ENCODE measurements at regions of chr19 and their contacts with region 1.

Region 1: DNA sequence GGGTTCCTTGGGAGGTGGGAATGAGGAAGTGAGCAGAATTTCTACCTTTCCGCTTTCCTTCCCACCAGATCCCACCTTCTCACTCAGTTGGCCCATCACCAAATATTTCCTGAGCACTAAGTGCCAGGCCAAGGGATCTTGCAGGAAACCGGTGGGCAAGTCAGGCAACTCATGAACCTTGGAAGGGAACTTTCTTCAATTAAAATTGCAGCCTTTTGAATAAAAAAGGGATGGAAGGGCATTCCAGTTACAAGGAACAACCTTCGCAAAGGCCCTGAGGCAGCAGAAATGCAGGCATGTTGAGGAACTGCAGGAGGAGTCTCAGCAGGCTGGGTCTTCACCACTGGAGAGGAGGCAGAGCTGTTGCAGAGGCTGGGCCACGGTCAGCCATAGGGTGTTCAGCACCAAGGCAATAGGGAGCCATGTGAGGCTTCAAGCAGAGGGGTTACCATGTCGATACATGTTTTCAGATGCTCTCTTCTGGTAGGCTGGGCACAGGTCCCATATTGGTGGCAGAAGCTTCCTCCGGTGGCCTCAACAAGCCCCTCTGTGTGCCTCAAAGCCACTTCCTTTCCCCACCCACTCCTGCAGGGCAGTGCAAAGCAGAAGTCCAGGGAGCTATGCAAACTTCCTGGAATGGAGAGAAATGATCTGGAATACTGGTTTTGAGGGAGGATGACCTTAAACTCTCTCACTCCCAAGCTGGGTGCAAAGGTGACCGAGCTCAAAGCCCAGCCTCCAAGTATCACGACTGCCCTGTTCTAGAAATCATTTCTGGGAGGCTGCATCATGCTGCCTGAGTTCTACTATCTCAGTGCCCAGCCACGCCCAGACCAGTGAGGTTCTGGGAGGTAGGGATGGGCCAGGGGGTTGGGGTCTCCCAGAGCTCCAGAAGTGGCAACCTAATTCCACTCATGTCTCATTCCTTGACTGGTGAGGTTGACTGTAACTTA is at the start of gene FUT6:
- DNase-seq: peak; percentile 59
- ATAC-seq: peak; percentile 70
- H3K4me3 ChIP-seq: peak within 1 kb of the TSS; percentile 69 to 84 (median 75)
- H3K27ac ChIP-seq: peak within 1 kb of the TSS; percentile 80
- H3K4me1 ChIP-seq: peaks cover 58% of the 10 kb centered on the region
- H3K27me3 ChIP-seq: no peaks in the 10 kb centered on the region; a peak in 1 of 5 replicates
- CTCF ChIP-seq: 0 out of 2 replicates have a peak, but pooled peaks have one; percentile 6
- EP300 ChIP-seq: 0 out of 4 replicates have a peak, but pooled peaks of 1 of the 2 experiments have one; percentile 55
- POLR2A ChIP-seq: peak in 1 of 2 experiments; percentile 63; a peak in 2 of 4 replicates
- RAD21 ChIP-seq: no peak
- total RNA-seq, gene FUT6: 5.0 and 8.2 TPM in 2 replicates

Region 2: DNA sequence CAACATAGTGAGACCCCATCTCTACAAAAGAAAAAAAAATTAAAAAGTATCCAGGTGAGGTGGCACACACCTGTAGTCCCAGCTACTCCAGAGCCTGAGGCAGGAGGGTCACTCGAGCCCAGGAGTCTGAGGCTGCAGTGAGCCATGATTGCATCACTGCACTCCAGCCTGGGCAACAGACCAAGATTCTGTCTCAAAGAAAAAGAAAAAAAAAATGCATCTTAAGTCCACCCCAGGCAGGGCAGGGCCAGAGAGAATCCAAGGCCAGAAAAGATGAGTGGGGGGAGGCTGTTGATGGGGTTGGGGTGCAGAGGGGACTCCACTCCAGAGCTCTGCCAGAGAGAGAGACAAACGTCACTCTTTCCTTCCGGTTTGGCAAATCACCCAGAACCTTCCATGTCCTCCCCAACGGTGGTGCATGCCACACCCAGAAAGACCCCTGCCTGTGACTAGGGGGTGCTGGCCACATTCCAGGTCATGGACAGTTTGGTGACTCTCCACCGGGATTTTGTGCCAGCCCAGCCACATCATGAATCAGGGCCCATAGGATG is 11.5 kb after region 1 on chr19:
- CTCF ChIA-PET with region 1: no interaction called
- POLR2A ChIA-PET with region 1: interaction called, 11 read pairs
- in situ Hi-C with region 1: no loop called
- intact Hi-C with region 1: no loop called
- DNase-seq: no peak
- ATAC-seq: no peak
- H3K4me3 ChIP-seq: no peak overlapping the region; a peak in 1 of 6 replicates
- H3K27ac ChIP-seq: no peak overlapping the region
- H3K4me1 ChIP-seq: peaks cover 25% of the 10 kb centered on the region
- H3K27me3 ChIP-seq: 0 out of 5 replicates have a peak, but pooled peaks cover 0 to 2% of the 10 kb centered on the region in 2 experiments
- CTCF ChIP-seq: no peak
- EP300 ChIP-seq: no peak
- POLR2A ChIP-seq: no peak
- RAD21 ChIP-seq: no peak

Region 3: GRCh38 chr19:5913739-5914357 is 74.5 kb after region 1 on chr19 and contains the start of gene CAPS:
- CTCF ChIA-PET with region 1: no interaction called
- POLR2A ChIA-PET with region 1: no interaction called
- in situ Hi-C with region 1: no loop called
- intact Hi-C with region 1: no loop called
- DNase-seq: peak; percentile 39
- ATAC-seq: peak; percentile 7
- H3K4me3 ChIP-seq: no peak within 1 kb of the TSS
- H3K27ac ChIP-seq: peak within 1 kb of the TSS; percentile 32
- H3K4me1 ChIP-seq: peaks cover 68% of the 10 kb centered on the region
- H3K27me3 ChIP-seq: no peaks in the 10 kb centered on the region
- CTCF ChIP-seq: no peak
- EP300 ChIP-seq: no peak
- POLR2A ChIP-seq: no peak
- RAD21 ChIP-seq: no peak; the same call in 1 of the 2 replicates
- total RNA-seq, gene CAPS: 1.7 and 3.1 TPM in 2 replicates